CD8-positive, alpha-beta T cell (primary cell): ENCODE measurements at regions of chr17 and their contacts with region 1.

Region 1: GRCh38 chr17:13031718-13032350 is 14.0 kb upstream of the ELAC2 start:
- DNase-seq: peak; percentile 10 to 72 (median 41)
- ATAC-seq: peak; percentile 81
- H3K4me3 ChIP-seq: no peak overlapping the region
- H3K4me3 Mint-ChIP-seq: no peak overlapping the region
- H3K27ac ChIP-seq: no peak overlapping the region
- H3K27ac Mint-ChIP-seq: peak overlapping the region; percentile 75
- H3K4me1 ChIP-seq: peaks cover 3% of the 10 kb centered on the region
- H3K4me1 Mint-ChIP-seq: peaks cover 16% of the 10 kb centered on the region
- H3K27me3 ChIP-seq: no peaks in the 10 kb centered on the region
- H3K27me3 Mint-ChIP-seq: peaks cover 8% of the 10 kb centered on the region
- CTCF ChIP-seq: peak; percentile 72

Region 2: GRCh38 chr17:13010959-13011358 is 20.9 kb before region 1 on chr17:
- CTCF ChIA-PET with region 1: interaction called, 203 read pairs
- POLR2A ChIA-PET with region 1: no interaction called
- intact Hi-C with region 1: no loop called
- DNase-seq: no peak
- ATAC-seq: no peak
- H3K4me3 ChIP-seq: no peak overlapping the region
- H3K4me3 Mint-ChIP-seq: no peak overlapping the region
- H3K27ac ChIP-seq: no peak overlapping the region
- H3K27ac Mint-ChIP-seq: no peak overlapping the region
- H3K4me1 ChIP-seq: no peaks in the 10 kb centered on the region
- H3K4me1 Mint-ChIP-seq: peaks cover 26% of the 10 kb centered on the region
- H3K27me3 ChIP-seq: no peaks in the 10 kb centered on the region
- H3K27me3 Mint-ChIP-seq: no peaks in the 10 kb centered on the region
- CTCF ChIP-seq: no peak

Region 3: GRCh38 chr17:13047011-13047606 is 15.3 kb after region 1 on chr17:
- CTCF ChIA-PET with region 1: interaction called, 36 read pairs
- POLR2A ChIA-PET with region 1: interaction called, 3 read pairs
- intact Hi-C with region 1: no loop called
- DNase-seq: no peak
- ATAC-seq: no peak
- H3K4me3 ChIP-seq: no peak overlapping the region
- H3K4me3 Mint-ChIP-seq: no peak overlapping the region
- H3K27ac ChIP-seq: no peak overlapping the region
- H3K27ac Mint-ChIP-seq: no peak overlapping the region
- H3K4me1 ChIP-seq: no peaks in the 10 kb centered on the region
- H3K4me1 Mint-ChIP-seq: no peaks in the 10 kb centered on the region
- H3K27me3 ChIP-seq: no peaks in the 10 kb centered on the region
- H3K27me3 Mint-ChIP-seq: peaks cover 27% of the 10 kb centered on the region
- CTCF ChIP-seq: no peak

Region 4: GRCh38 chr17:13055131-13055530 is 23.3 kb after region 1 on chr17:
- CTCF ChIA-PET with region 1: interaction called, 32 read pairs
- POLR2A ChIA-PET with region 1: no interaction called
- intact Hi-C with region 1: no loop called
- DNase-seq: no peak
- ATAC-seq: no peak
- H3K4me3 ChIP-seq: no peak overlapping the region
- H3K4me3 Mint-ChIP-seq: no peak overlapping the region
- H3K27ac ChIP-seq: no peak overlapping the region
- H3K27ac Mint-ChIP-seq: no peak overlapping the region
- H3K4me1 ChIP-seq: no peaks in the 10 kb centered on the region
- H3K4me1 Mint-ChIP-seq: no peaks in the 10 kb centered on the region
- H3K27me3 ChIP-seq: peaks cover 0 to 2% of the 10 kb centered on the region in 2 experiments
- H3K27me3 Mint-ChIP-seq: peaks cover 23% of the 10 kb centered on the region
- CTCF ChIP-seq: no peak